H1 (cell line): ENCODE measurements at regions of chr17 and their contacts with region 1.

Region 1: DNA sequence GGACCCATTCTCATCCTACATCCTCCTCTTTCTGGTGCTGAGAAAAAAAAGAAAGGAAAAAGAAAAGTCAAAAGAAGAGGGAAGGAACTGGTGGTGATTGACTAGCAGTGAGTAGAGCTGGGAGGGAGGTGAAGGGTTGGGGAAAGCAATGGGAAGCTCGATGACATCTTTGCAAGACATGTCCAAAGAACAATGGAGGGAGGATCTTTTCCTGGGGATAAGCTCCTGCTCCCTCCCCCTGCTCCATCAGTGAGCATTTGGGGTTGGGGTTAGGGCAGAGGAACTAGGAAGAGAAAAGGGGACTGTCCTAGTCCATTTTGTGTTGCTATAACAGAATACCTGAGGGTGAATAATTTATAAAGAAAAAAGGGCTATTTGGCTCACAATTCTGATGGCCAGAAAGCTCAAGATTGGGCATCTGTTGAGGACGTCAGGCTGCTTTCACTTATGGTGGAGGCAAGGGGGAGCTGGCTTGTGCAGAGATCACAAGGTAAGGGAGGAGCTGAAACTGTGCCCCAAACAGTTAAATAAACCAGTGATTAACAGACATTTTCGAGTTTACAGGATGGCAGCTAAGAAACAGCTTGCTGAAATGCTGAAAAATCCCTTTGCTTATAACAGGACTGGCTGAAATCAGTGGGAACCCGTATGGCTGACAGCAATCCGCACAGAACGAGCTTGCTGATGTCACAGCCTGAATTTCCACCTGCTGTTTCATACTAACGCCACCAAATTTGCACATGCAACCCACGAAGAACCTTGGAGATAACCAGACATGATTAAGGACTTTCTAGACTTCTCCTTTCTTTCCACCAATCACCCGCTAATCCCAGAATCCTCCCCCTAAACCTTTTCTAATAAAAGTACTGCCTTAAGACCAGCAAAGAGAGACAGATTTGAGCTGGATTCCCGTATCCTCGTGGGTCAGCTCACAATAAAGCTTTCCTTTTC is 1.6 kb upstream of the ODF4 start:
- DNase-seq: no peak
- H3K4me3 ChIP-seq: no peak overlapping the region
- H3K27ac ChIP-seq: no peak overlapping the region
- H3K4me1 ChIP-seq: peaks cover 2 to 10% (median 5%) of the 10 kb centered on the region in 4 experiments; a peak in 6 of 7 replicates
- H3K27me3 ChIP-seq: no peaks in the 10 kb centered on the region
- CTCF ChIP-seq: no peak
- EP300 ChIP-seq: no peak
- POLR2A ChIP-seq: no peak
- RAD21 ChIP-seq: no peak

Region 2: DNA sequence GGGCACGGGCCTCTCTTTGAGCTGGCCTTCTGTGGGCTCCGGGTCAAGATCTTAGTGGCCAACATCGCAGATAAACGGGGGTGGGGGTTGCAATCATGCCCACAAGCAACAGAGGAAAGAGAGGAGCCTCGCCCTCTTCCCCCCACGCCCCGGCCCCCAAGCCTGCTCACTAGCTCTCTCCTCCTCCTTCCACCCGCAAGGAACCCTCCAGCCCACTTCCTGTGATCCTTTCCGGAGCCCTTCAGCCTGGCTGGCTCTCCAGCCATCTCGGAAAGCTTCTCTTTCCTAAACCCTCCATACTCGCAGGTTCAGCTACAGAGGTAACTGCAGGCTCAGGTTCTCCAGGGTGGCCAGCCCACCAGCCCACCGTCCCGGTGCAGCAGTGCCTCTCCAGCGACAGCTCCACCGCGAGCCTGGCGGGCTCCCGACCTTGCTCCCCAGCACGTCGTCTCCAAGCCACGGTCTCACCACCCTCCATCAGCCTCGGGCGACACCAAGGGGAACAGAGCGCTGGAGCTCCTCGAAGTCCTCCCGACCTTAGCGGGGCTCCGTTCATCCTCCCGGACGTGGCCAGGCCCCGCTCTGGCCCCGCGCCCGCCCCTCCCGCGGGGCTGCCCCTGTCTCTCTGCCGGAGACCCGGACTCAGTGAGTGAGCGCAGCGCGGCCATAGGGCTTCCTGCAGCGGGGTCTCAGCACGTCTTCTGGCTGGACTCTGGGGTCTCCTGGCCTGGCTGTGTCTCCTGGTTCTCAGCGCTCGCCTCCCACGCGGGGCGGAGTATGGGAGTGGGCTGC is 11.4 kb before region 1 on chr17:
- CTCF ChIA-PET with region 1: interaction called, 56 read pairs
- POLR2A ChIA-PET with region 1: interaction called, 21 read pairs
- DNase-seq: peak in 1 of 2 experiments; percentile 74
- H3K4me3 ChIP-seq: peak overlapping the region; percentile 56 to 73 (median 62)
- H3K27ac ChIP-seq: no peak overlapping the region
- H3K4me1 ChIP-seq: peaks cover 0 to 11% (median 5%) of the 10 kb centered on the region in 4 experiments; a peak in 5 of 7 replicates
- H3K27me3 ChIP-seq: peaks cover 2 to 20% (median 17%) of the 10 kb centered on the region in 4 experiments; a peak in 6 of 7 replicates
- CTCF ChIP-seq: no peak
- EP300 ChIP-seq: no peak
- POLR2A ChIP-seq: 0 out of 3 replicates have a peak, but pooled peaks of 1 of the 2 experiments have one; percentile 33
- RAD21 ChIP-seq: no peak

Region 3: GRCh38 chr17:8359769-8360168 is 21.7 kb after region 1 on chr17:
- CTCF ChIA-PET with region 1: interaction called, 3 read pairs
- POLR2A ChIA-PET with region 1: interaction called, 10 read pairs
- DNase-seq: no peak
- H3K4me3 ChIP-seq: no peak overlapping the region
- H3K27ac ChIP-seq: no peak overlapping the region
- H3K4me1 ChIP-seq: peaks cover 0 to 5% (median 1%) of the 10 kb centered on the region in 4 experiments; a peak in 1 of 7 replicates
- H3K27me3 ChIP-seq: no peaks in the 10 kb centered on the region
- CTCF ChIP-seq: no peak
- EP300 ChIP-seq: no peak
- POLR2A ChIP-seq: no peak
- RAD21 ChIP-seq: no peak